Activated T-helper 1 cell treated with anti-CD3 and anti-CD28 coated beads, Interleukin-12 subunit alpha, Interleukin-12 subunit beta, Interleukin-2, Interleukin-4 antibody, amounts not matched to agents 30 ng/mL and 10 ng/mL and 1 ng/mL, durations not matched to agents 14 hours and 24 hours and 36 hours (primary cell): ENCODE measurements at regions of chr12 and their contacts with region 1.

Region 1: DNA sequence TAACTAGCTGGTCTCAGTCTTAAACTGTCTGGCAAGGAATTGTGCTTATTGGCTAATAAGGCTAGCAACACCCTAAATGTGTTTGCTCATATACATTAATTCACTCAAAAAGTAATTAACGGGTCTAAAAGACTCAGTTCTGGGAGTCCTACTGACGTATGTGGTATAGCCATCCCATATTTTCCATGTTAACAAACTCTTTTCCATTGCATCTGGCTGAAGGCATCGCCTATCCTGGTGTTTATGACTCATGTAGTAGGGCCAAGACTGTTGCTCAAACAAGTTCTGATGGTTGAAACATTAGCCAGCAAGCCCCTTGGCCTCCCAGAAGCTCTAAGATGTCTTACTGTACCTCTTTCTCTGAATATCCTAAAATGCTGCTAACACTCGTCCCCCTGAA is 98.5 kb downstream of the PHLDA1 start:
- DNase-seq: no peak
- H3K4me3 Mint-ChIP-seq: no peak overlapping the region
- H3K27ac Mint-ChIP-seq: peak overlapping the region; percentile 89
- H3K4me1 Mint-ChIP-seq: peaks cover 49% of the 10 kb centered on the region
- H3K27me3 Mint-ChIP-seq: peaks cover 4% of the 10 kb centered on the region

Region 2: GRCh38 chr12:75526655-75527511 is 406.2 kb before region 1 on chr12:
- intact Hi-C with region 1: loop called (anchors 2 kb)
- DNase-seq: peak; percentile 9
- H3K4me3 Mint-ChIP-seq: no peak overlapping the region
- H3K27ac Mint-ChIP-seq: no peak overlapping the region
- H3K4me1 Mint-ChIP-seq: peaks cover 15% of the 10 kb centered on the region
- H3K27me3 Mint-ChIP-seq: peaks cover 35% of the 10 kb centered on the region

Region 3: GRCh38 chr12:75658901-75659383 is 274.2 kb before region 1 on chr12:
- intact Hi-C with region 1: loop called (anchors 5 kb)
- DNase-seq: no peak
- H3K4me3 Mint-ChIP-seq: no peak overlapping the region
- H3K27ac Mint-ChIP-seq: peak overlapping the region; percentile 33
- H3K4me1 Mint-ChIP-seq: peaks cover 36% of the 10 kb centered on the region
- H3K27me3 Mint-ChIP-seq: no peaks in the 10 kb centered on the region

Region 4: DNA sequence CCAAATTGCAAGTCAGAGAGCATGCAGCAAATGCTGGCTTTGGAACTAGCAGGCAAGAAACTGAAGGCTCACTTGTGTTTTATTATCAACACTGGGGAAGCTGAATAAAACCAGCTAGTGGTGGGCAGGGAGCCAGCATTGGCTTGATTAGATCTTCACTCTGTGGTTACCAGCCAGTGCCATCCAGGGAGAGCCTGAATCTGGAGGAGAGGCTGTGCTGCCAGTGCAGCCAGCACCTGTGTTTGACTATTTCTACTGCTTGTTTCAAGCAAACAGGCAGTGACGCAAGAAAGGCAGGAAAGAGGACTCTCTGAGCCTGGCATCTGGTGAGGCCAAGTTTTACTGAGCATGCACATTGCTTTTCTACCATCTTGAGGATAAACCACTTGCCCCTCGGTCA is 148.5 kb before region 1 on chr12:
- intact Hi-C with region 1: no loop called
- DNase-seq: no peak
- H3K4me3 Mint-ChIP-seq: no peak overlapping the region
- H3K27ac Mint-ChIP-seq: no peak overlapping the region
- H3K4me1 Mint-ChIP-seq: peaks cover 2% of the 10 kb centered on the region
- H3K27me3 Mint-ChIP-seq: peaks cover 13% of the 10 kb centered on the region

Region 5: DNA sequence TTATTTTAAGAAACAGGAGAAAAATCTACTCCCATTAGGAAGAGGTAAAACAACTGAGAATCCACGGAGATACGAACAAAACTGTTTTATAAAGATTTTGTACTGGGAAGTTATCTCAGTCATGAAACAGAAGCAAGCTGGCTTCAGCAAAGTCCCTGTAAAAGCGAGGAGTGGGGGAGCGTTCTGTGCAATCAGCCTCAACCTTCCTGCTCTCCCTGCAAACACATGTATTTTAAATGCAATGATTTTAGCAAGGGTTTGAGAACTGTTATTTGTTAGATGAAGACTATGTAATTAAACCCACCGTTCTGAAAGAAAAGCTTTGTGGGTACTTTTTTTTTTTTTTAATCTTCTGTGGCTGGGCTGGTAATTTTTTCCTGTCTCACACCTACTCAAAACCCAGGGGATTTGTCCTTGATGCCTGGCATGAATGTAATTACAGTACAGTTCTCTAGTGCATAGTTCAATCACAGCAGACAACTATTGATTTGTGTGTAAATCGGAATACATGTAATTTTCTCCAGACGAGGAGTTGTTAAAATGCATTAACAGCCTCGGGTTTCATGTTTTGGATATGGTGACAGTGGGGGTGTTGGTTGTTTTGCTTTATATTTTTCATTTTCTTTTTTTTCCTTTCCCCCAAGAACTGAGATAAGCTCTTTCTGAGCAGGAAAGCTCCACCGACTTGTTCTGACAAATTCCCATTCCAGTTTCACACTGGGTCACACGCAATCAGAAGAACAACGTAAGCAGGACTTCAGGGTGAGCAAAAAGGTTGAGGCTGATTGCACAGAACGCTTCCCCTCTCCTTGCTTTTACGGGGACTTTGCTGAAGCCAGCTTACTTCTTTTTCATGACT is 55.1 kb before region 1 on chr12:
- intact Hi-C with region 1: loop called (anchors 5 kb)
- DNase-seq: no peak
- H3K4me3 Mint-ChIP-seq: no peak overlapping the region
- H3K27ac Mint-ChIP-seq: no peak overlapping the region
- H3K4me1 Mint-ChIP-seq: peaks cover 25% of the 10 kb centered on the region
- H3K27me3 Mint-ChIP-seq: peaks cover 32% of the 10 kb centered on the region

Region 6: DNA sequence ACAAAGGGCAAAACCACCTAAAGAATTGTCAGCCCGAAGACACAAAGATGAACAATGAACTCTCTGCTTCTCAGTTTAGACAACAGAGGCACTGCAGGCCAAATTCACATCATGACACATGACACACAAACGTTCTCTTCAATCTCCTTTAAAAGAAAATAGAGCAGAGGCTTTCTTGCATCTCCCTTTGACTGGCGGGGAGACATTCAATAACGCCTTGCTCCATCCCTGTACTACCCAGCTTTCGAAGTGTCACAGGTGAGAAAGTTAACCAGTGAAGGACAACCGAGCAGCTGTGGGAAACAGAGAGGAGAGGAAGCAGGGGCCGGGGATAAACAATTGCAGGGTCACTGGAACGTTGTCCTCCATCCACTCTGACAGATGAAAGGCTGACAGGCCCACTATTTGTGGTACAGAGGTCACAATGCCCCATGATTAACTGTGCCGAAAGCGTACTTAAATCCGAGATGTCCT is 32.3 kb before region 1 on chr12:
- intact Hi-C with region 1: no loop called
- DNase-seq: no peak
- H3K4me3 Mint-ChIP-seq: no peak overlapping the region
- H3K27ac Mint-ChIP-seq: no peak overlapping the region
- H3K4me1 Mint-ChIP-seq: no peaks in the 10 kb centered on the region
- H3K27me3 Mint-ChIP-seq: peaks cover 35% of the 10 kb centered on the region

Region 7: DNA sequence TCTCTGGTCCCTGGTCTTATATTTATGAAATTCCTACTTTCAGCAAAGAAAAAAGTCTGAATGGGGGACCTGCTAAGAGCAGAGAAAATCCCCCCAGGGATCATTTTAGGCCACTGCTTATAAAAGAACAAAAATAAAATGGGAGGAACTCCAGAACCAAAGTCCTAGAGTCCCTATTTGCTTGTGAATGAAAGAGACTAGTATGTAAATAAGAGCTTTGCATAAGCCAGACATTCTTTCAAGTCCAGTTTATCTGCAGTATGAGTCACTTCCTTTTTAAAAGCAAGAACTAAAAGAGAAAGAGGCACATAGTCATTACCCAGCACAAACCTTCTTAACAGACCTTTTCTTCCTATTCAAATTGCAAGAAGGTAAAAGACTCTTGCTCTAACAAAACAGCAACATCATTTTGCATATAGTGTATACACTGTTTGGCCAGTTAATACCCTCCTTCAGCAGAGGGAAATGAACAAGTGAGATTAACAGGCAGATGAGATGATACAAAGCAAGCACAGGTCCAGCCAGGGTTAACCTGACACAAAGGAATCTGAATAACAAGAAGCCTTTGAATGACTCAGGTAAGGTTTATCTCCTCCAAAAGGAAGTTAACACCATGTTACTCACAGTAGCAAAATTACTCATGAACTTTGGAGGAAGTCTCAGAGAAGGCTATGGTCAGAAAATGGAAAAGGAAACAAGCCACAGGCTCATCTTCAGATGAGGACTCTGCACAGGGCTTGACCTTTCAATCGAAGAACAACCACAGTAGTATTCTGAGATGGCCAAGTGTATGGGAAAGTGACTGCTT is 11.2 kb after region 1 on chr12:
- intact Hi-C with region 1: loop called (anchors 1 kb)
- DNase-seq: peak; percentile 27
- H3K4me3 Mint-ChIP-seq: peak overlapping the region; percentile 65
- H3K27ac Mint-ChIP-seq: peak overlapping the region; percentile 98
- H3K4me1 Mint-ChIP-seq: peaks cover 30% of the 10 kb centered on the region
- H3K27me3 Mint-ChIP-seq: no peaks in the 10 kb centered on the region

Region 8: GRCh38 chr12:76020731-76021672 is 87.9 kb after region 1 on chr12:
- intact Hi-C with region 1: loop called (anchors 1 kb)
- DNase-seq: peak; percentile 68
- H3K4me3 Mint-ChIP-seq: peak overlapping the region; percentile 74
- H3K27ac Mint-ChIP-seq: peak overlapping the region; percentile 99
- H3K4me1 Mint-ChIP-seq: peaks cover 73% of the 10 kb centered on the region
- H3K27me3 Mint-ChIP-seq: no peaks in the 10 kb centered on the region

Region 9: DNA sequence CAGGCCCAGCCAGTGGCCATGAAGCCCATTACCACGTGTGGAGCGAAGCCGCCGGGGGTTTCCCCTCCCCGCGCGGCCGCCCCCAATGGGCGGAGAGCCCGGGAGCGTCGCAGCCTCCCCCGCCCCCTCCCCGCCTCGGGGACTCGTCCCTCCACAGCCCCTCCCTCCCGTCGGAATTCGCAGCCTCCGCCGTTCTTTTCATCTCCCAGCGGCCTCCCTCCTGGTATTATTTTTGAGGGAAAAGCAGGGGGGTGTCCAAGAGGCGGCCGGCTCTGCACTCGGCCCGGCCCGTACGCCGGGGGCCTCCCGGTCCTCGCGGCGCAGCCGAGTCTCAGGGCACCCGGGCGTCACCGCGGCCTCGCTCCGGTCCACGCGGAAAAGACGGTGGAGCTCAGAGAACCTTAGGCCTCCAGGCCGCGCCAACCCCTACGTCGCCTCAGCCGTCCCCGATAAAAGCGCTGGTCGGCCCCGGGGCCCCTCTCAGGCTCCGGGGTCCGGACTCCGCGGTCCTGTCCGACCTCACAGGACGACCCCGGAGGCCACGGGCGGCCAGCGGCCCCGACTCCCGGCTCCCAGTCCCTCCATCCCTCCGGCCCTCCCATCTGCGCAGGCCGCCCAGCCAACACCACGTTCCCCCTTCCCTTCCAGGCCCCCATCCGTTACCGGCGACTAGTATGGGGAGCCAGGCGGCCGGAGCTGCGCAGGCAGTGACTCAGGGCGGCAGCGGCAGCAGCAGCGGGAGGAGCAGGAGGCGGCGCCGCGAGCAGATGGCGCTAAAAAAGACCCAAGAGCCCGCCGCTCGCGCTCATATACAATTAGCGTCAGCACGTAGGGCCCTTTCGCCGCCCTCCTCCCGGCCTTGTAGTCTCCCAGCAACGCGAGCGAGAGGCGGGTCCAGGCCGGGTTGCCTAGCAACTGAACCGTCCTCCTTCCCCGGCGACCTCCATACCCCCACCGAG is 151.1 kb after region 1 on chr12 and contains the start of gene NAP1L1:
- intact Hi-C with region 1: loop called (anchors 1 kb)
- DNase-seq: peak; percentile 96
- H3K4me3 Mint-ChIP-seq: peak within 1 kb of the TSS; percentile 100
- H3K27ac Mint-ChIP-seq: peak within 1 kb of the TSS; percentile 100
- H3K4me1 Mint-ChIP-seq: peaks cover 62% of the 10 kb centered on the region
- H3K27me3 Mint-ChIP-seq: no peaks in the 10 kb centered on the region
- total RNA-seq, gene NAP1L1: 584 and 605 TPM in 2 replicates